ENCODE measurements at regions of chr7 and their contacts with region 1.

Region 1: DNA sequence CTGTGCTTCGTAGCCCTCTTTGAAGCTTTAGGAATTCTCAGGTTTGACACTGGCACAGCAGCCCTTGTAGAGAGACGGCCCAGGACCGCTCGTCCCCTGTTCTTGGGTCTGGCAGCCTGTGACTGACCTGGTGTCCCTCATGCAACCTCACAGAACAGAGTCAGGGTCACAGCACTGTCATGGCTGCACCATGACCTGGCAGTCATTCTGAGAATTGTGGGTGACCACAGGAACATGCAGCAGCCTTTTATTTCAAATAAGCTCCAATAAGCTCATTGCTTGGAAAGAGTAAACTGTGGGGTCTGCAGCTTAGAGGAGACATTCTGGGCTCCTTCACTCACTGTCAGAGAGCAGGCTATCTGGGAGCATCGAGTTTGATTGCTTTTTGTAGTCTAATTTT is 42.5 kb downstream of the MYO1G start:
- DNase-seq: no peak
- H3K4me3 ChIP-seq: no peak overlapping the region
- H3K27ac ChIP-seq: no peak overlapping the region
- H3K4me1 ChIP-seq: no peaks in the 10 kb centered on the region
- H3K27me3 ChIP-seq: no peaks in the 10 kb centered on the region
- CTCF ChIP-seq: no peak

Region 2: DNA sequence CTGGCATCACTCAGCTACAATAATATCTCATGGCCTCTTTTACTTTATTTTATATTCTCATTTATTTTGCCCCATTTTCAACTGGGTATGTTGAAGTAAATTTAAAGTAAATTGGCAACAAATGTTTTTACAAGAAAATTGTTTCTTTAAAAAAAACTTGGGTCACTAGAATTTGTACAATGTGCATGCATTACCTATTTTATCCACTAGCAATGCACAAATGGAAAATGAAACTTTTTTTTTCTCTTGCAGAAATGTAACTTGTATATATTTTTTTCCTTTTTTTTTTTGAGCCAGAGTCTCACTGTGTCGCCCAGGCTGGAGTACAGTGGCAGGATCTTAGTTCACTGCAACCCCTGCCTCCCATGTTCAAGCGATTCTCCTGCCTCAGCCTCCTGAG is 78.2 kb before region 1 on chr7:
- CTCF ChIA-PET with region 1: no interaction called
- dilution Hi-C with region 1: loop called (anchors 5 kb)
- in situ Hi-C with region 1: no loop called
- intact Hi-C with region 1: no loop called
- DNase-seq: no peak
- H3K4me3 ChIP-seq: no peak overlapping the region
- H3K27ac ChIP-seq: no peak overlapping the region
- H3K4me1 ChIP-seq: peaks cover 4% of the 10 kb centered on the region
- H3K27me3 ChIP-seq: no peaks in the 10 kb centered on the region
- CTCF ChIP-seq: no peak

Region 3: GRCh38 chr7:44885394-44886317 is 50.7 kb before region 1 on chr7 and contains the start of gene PURB:
- CTCF ChIA-PET with region 1: no interaction called
- dilution Hi-C with region 1: loop called (anchors 5 kb)
- in situ Hi-C with region 1: no loop called
- intact Hi-C with region 1: no loop called
- DNase-seq: peak; percentile 99
- H3K4me3 ChIP-seq: peak within 1 kb of the TSS; percentile 69 to 94 (median 84)
- H3K27ac ChIP-seq: peak within 1 kb of the TSS; percentile 97
- H3K4me1 ChIP-seq: peaks cover 30% of the 10 kb centered on the region
- H3K27me3 ChIP-seq: no peaks in the 10 kb centered on the region
- CTCF ChIP-seq: no peak
- total RNA-seq, gene PURB: 30.2 to 32.8 TPM

Region 4: GRCh38 chr7:44973610-44974401 is 37.5 kb after region 1 on chr7:
- CTCF ChIA-PET with region 1: no interaction called
- dilution Hi-C with region 1: loop called (anchors 5 kb)
- in situ Hi-C with region 1: no loop called
- intact Hi-C with region 1: no loop called
- DNase-seq: no peak
- H3K4me3 ChIP-seq: no peak overlapping the region
- H3K27ac ChIP-seq: no peak overlapping the region
- H3K4me1 ChIP-seq: no peaks in the 10 kb centered on the region
- H3K27me3 ChIP-seq: no peaks in the 10 kb centered on the region
- CTCF ChIP-seq: peak; percentile 56 to 65

Region 5: DNA sequence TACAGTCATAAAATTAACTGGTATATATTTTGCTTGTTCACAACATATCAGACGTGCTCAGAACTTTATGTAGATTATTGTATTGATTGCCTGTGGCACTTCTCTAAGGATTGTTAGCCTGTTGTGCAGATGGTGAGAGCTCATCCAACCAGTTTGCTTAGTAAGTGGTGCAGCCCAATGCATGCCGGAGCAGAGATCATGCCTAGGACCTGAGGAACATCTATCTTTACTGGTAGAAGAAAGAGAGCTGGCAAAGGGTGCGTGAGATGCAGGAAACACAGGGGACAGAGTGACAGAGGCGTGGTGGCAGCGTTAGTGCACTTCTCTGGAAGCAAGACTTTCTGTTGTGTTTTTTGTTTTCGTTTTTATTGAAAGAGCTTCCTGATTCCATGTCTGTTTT is 99.6 kb after region 1 on chr7:
- CTCF ChIA-PET with region 1: no interaction called
- dilution Hi-C with region 1: no loop called
- in situ Hi-C with region 1: no loop called
- intact Hi-C with region 1: no loop called
- DNase-seq: no peak
- H3K4me3 ChIP-seq: no peak overlapping the region
- H3K27ac ChIP-seq: no peak overlapping the region
- H3K4me1 ChIP-seq: peaks cover 39% of the 10 kb centered on the region
- H3K27me3 ChIP-seq: no peaks in the 10 kb centered on the region
- CTCF ChIP-seq: no peak

Region 6: GRCh38 chr7:45638916-45639315 is 702.6 kb after region 1 on chr7:
- CTCF ChIA-PET with region 1: no interaction called
- dilution Hi-C with region 1: no loop called
- in situ Hi-C with region 1: no loop called
- intact Hi-C with region 1: no loop called
- DNase-seq: no peak
- H3K4me3 ChIP-seq: no peak overlapping the region
- H3K27ac ChIP-seq: no peak overlapping the region
- H3K4me1 ChIP-seq: no peaks in the 10 kb centered on the region
- H3K27me3 ChIP-seq: no peaks in the 10 kb centered on the region
- CTCF ChIP-seq: no peak

Measured in mammary epithelial cell (primary cell).